ENCODE measurements at regions of chr12 and their contacts with region 1.

Region 1: DNA sequence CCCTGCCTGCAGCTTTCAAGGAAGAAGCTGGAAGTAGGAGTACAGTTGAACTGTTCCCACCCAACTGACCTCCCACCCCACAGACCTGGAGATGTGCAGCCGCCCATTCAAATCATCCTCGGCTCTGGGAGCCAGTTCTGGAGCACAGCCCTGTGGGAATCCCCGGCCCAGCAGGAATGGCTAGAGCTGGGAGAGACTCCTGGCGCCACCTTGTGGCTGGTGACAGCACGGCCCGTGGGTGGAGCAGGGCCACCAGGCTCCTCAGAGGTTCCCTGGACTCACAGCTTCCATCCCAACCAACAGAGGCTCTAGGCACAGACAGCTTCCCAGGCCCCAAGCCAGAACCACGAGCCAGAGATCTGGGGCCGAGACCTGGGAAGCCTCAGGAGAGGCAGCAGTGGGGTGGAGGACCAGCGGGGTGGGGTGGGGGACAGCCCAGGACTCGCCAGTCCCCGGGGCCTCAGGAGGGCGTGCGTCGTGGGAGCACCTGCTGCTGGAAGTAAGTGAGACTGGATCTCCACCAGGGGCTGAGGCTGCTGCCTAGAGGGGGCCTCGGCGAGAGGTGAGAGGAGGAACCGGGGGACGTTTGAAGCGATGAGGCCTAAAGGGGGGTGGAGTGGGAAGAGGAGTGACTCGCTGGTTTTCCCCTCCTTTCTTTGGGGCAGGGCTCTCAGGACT is 43.4 kb downstream of the RNF34 start:
- DNase-seq: peak; percentile 92
- CTCF ChIP-seq: peak; percentile 92

Region 2: DNA sequence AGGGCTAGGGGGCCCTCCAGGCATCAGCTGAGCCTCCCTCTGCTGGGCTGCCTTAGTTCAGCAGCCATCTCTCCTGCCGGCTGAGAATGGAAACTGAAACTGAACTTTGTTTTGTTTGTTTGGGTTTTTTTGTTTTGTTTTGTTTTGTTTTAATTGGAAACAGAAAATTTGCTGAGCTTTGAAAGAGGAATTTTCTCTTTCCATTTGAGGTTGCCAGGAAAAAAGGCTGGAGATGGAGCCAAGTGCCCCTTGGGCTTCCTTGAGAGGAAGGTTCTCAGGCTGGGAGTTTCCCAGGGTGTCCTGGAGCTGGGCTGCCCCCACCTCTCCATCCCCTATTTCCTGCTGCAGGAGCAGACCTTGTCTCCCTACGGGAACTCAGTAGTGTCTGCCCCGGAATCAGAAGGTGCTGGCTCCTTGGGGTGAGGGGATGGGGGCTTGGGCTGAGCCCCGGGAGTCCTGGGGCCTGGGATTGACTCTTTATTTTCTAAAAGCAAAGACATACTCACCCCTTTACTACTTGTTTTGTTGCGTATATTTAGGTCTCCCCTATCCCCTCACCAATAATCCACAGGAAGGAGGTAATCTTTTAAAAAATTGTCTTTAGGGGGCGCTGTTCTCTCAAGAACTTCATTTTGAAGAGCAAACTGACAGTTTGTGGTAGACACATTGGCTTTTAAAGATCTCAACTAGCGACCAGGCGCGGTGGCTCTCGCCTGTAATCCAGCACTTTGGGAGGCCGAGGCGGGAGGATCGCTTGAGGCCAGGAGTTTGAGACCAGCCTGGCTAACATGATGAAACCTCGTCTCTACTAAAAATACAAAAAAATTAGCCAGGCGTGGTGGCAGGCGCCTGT is 383.0 kb before region 1 on chr12:
- in situ Hi-C with region 1: loop called (anchors 25 kb)
- DNase-seq: peak; percentile 74
- CTCF ChIP-seq: peak; percentile 60

Region 3: DNA sequence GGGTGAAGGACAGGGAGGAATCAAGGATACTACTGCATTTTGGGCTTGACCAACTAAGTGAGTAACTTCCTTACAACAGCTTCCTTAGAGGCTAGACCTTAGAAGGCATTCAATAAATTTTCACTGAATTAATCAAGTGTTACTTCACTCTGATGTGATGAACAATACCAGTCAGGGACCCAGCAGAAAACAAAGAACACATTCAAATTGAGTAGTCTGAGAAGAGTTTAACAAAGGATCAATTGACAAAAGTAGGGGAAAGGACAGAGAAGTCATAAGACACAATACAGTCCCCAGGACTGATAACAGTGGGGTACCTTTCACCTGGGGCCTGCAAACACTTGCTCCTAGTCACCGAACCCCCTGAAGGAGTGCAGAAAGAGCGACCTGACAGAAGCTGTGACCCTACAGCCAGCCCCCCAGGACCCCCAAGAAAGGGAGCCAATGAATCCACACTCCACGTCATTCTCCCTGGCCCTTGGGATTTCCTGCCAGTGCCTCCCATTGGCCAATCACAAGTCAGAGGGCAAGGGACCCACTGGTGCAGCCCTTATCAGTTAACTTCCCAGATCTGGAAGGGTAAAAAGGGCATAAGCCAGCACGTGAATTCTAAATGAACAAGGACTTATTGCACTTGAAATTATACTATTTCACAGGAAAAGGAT is 98.0 kb before region 1 on chr12:
- in situ Hi-C with region 1: loop called (anchors 10 kb)
- DNase-seq: no peak
- CTCF ChIP-seq: no peak

Measured in GM13977 (cell line).